B cell (primary cell): ENCODE measurements at regions of chr5 and their contacts with region 1.

Region 1: DNA sequence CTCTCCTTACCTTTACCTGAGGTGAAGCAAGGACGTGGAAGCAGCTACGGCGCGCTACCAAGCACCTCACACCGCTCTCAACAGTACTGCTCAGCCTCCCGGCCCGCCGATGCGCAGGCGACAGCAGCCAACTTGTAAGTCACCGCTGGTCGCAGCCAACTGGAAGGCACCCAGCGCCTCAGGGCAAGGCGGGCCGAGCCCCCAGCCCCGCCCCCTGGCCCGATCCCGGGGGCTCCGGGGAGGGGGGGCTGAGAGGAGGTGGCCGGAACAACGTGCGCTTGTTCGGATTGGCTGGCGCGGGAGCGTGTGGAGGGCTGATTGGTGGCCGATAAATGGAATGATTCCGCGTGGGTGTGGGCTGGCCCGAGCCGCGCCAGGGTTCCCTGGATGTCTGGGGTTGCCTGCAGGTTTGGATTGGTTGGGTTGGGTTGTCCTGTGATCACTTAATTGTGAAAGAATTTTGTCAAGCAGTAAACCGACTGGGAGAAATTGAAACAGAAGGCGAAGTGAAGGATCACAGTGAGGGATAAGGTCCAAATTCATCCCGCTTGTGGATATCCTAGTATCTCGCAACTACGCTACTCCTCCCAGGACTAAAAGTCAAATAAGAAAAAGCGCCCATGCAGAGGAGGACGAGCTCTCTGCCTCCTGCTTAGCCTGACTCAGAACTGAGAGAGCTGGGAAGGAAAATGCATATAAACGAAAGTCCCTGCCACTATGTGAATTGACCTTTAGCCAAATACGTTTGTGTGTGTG is at the start of gene STARD4:
- DNase-seq: peak; percentile 96
- ATAC-seq: peak; percentile 96
- H3K4me3 ChIP-seq: peak within 1 kb of the TSS; percentile 90 to 96 (median 93)
- H3K4me3 Mint-ChIP-seq: peak within 1 kb of the TSS; percentile 99
- H3K27ac ChIP-seq: peak within 1 kb of the TSS; percentile 81 to 82
- H3K27ac Mint-ChIP-seq: peak within 1 kb of the TSS; percentile 98
- H3K4me1 ChIP-seq: peaks cover 10 to 12% of the 10 kb centered on the region in 2 donors
- H3K4me1 Mint-ChIP-seq: peaks cover 36% of the 10 kb centered on the region
- H3K27me3 ChIP-seq: no peaks in the 10 kb centered on the region
- H3K27me3 Mint-ChIP-seq: no peaks in the 10 kb centered on the region
- CTCF ChIP-seq: no peak
- total RNA-seq, gene STARD4: 28.5 and 31.1 TPM in 2 replicates

Region 2: DNA sequence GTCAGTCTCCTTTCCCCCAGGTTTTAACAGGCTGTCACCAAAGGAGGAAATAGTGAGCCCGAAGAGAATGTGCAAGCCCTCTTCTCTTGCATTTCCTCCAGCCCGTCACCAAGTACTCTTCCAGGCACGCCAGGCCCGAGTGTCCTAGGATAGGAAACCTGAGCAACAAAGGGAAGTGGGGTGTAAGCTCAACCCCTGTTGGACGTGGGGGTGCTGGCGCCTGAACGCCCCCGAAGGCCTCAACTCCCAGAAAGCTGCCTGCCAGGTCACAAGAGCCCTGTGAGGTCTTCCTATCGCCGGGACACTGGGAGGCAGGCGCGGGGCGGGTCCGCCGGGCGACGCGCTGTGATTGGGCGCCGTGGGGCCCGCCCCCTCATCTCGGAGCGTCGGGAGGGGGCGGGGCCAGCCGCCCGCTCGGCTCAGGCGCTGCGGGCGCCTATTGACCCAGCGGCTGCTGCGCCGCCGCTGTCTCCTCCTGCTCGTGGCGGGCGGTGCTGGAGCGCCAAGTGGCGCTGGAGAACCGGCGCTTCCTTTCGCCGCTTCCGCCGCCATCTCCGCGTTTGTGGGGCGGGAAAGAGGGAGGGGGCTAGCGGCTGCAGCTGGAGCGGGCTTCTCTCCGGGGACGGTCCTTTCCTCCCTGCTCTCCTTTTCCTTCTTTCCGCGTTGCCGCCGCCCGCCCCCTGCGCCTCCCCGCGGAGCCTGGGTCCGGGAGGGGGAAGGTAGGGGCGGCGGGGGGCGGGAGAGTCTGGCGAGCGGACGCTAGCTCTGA is 1823.4 kb before region 1 on chr5:
- CTCF ChIA-PET with region 1: no interaction called
- POLR2A ChIA-PET with region 1: no interaction called
- intact Hi-C with region 1: loop called (anchors 10 kb)
- DNase-seq: peak; percentile 94
- ATAC-seq: peak; percentile 80
- H3K4me3 ChIP-seq: peak overlapping the region; percentile 16 to 92 (median 88)
- H3K4me3 Mint-ChIP-seq: peak overlapping the region; percentile 85
- H3K27ac ChIP-seq: peak overlapping the region; percentile 90 to 91
- H3K27ac Mint-ChIP-seq: peak overlapping the region; percentile 81
- H3K4me1 ChIP-seq: peaks cover 25 to 28% of the 10 kb centered on the region in 2 donors
- H3K4me1 Mint-ChIP-seq: peaks cover 33% of the 10 kb centered on the region
- H3K27me3 ChIP-seq: no peaks in the 10 kb centered on the region
- H3K27me3 Mint-ChIP-seq: peaks cover 5% of the 10 kb centered on the region
- CTCF ChIP-seq: no peak

Region 3: GRCh38 chr5:111092062-111092853 is 420.3 kb before region 1 on chr5 and contains the start of gene WDR36:
- CTCF ChIA-PET with region 1: no interaction called
- POLR2A ChIA-PET with region 1: no interaction called
- intact Hi-C with region 1: loop called (anchors 5 kb)
- DNase-seq: peak; percentile 93
- ATAC-seq: peak; percentile 94
- H3K4me3 ChIP-seq: peak within 1 kb of the TSS; percentile 87 to 94 (median 91)
- H3K4me3 Mint-ChIP-seq: peak within 1 kb of the TSS; percentile 97
- H3K27ac ChIP-seq: peak within 1 kb of the TSS; percentile 70 to 73
- H3K27ac Mint-ChIP-seq: peak within 1 kb of the TSS; percentile 74
- H3K4me1 ChIP-seq: peaks cover 13 to 24% of the 10 kb centered on the region in 2 donors
- H3K4me1 Mint-ChIP-seq: peaks cover 25% of the 10 kb centered on the region
- H3K27me3 ChIP-seq: peaks cover 0 to 7% (median 3%) of the 10 kb centered on the region in 4 experiments
- H3K27me3 Mint-ChIP-seq: peaks cover 6% of the 10 kb centered on the region
- CTCF ChIP-seq: no peak
- total RNA-seq, gene WDR36: 33.9 and 35.2 TPM in 2 replicates

Region 4: GRCh38 chr5:111757355-111758283 is 245.1 kb after region 1 on chr5:
- CTCF ChIA-PET with region 1: no interaction called
- POLR2A ChIA-PET with region 1: no interaction called
- intact Hi-C with region 1: loop called (anchors 5 kb)
- DNase-seq: peak; percentile 90
- ATAC-seq: peak; percentile 80
- H3K4me3 ChIP-seq: peak overlapping the region; percentile 68 to 83 (median 77)
- H3K4me3 Mint-ChIP-seq: peak overlapping the region; percentile 92
- H3K27ac ChIP-seq: peak overlapping the region; percentile 76 to 81
- H3K27ac Mint-ChIP-seq: peak overlapping the region; percentile 91
- H3K4me1 ChIP-seq: peaks cover 20 to 22% of the 10 kb centered on the region in 2 donors
- H3K4me1 Mint-ChIP-seq: peaks cover 21% of the 10 kb centered on the region
- H3K27me3 ChIP-seq: no peaks in the 10 kb centered on the region
- H3K27me3 Mint-ChIP-seq: peaks cover 7% of the 10 kb centered on the region
- CTCF ChIP-seq: no peak

Region 5: DNA sequence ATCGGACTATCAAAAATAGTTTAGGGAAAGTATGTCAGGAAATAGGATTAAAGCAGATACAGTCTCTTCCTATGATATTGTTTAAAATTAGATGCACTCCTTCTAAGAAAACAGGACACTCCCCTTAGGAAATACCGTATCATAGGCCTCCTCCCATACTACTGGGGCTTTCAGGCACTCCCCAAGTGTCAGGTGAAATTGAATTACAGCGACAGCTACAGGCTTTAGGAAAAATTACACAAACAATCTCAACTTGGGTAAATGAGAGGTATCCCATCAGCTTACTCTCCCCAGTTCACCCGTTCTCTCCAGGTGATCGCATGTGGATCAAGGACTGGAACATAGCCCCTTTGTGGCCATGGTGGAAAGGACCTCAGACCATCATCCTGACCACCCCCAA is 1017.0 kb after region 1 on chr5:
- CTCF ChIA-PET with region 1: interaction called, 3 read pairs
- POLR2A ChIA-PET with region 1: no interaction called
- intact Hi-C with region 1: loop called (anchors 5 kb)
- DNase-seq: peak; percentile 56
- ATAC-seq: no peak
- H3K4me3 ChIP-seq: no peak overlapping the region
- H3K4me3 Mint-ChIP-seq: no peak overlapping the region
- H3K27ac ChIP-seq: peak overlapping the region in 1 of 2 donors; percentile 61
- H3K27ac Mint-ChIP-seq: peak overlapping the region; percentile 85
- H3K4me1 ChIP-seq: peaks cover 81 to 83% of the 10 kb centered on the region in 2 donors
- H3K4me1 Mint-ChIP-seq: peaks cover 93% of the 10 kb centered on the region
- H3K27me3 ChIP-seq: no peaks in the 10 kb centered on the region
- H3K27me3 Mint-ChIP-seq: no peaks in the 10 kb centered on the region
- CTCF ChIP-seq: peak; percentile 66

Region 6: DNA sequence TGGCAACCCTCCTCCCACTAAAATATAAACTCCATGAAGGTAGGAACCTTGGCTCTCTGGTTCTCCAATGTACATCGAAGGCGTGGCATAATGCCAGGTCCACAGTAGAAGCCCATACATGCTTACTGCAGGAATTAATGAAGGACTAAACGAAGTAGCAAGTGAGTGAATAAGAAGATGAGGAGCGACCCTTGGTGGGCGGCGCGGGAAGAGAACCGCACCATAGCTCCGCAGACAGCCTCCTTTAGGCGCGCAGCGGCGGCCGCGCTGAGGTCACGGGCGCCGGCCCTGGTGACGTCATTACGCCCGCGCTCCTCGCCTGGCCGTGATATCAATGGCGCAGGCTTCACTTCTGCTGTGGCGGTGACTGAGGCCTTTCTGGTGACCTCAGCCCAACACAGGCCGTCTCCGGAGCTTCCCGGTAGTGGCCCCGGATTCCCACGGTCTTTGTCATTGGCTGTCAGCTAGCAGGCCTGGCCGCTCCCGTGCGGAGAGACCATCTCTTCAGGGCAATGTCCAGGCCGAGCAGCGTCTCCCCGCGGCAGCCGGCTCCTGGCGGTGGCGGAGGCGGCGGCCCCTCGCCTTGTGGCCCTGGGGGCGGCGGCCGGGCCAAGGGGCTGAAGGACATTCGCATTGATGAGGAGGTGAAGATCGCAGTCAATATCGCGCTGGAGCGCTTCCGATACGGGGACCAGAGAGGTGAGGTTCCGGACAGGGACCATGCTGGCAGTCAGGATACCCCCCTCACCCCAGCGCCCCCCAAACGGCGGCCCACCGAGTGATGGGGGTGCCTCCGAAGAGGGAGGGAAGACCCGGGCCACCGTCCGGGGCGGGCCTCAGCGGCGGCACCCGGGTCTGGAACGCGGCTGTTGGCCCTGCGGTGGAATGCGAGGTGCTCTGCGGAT is 2001.1 kb after region 1 on chr5 and contains the start of gene YTHDC2:
- CTCF ChIA-PET with region 1: no interaction called
- POLR2A ChIA-PET with region 1: no interaction called
- intact Hi-C with region 1: loop called (anchors 2 kb)
- DNase-seq: peak; percentile 93
- ATAC-seq: peak; percentile 97
- H3K4me3 ChIP-seq: peak within 1 kb of the TSS; percentile 59 to 93 (median 84)
- H3K4me3 Mint-ChIP-seq: peak within 1 kb of the TSS; percentile 99
- H3K27ac ChIP-seq: peak within 1 kb of the TSS; percentile 83 to 93
- H3K27ac Mint-ChIP-seq: peak within 1 kb of the TSS; percentile 95
- H3K4me1 ChIP-seq: peaks cover 7 to 17% of the 10 kb centered on the region in 2 donors
- H3K4me1 Mint-ChIP-seq: peaks cover 30% of the 10 kb centered on the region
- H3K27me3 ChIP-seq: peaks cover 0 to 8% (median 3%) of the 10 kb centered on the region in 4 experiments
- H3K27me3 Mint-ChIP-seq: peaks cover 18% of the 10 kb centered on the region
- CTCF ChIP-seq: peak; percentile 18
- total RNA-seq, gene YTHDC2: 52.6 and 62.4 TPM in 2 replicates